CD4-positive, alpha-beta T cell (primary cell): ENCODE measurements at regions of chr17 and their contacts with region 1.

Region 1: DNA sequence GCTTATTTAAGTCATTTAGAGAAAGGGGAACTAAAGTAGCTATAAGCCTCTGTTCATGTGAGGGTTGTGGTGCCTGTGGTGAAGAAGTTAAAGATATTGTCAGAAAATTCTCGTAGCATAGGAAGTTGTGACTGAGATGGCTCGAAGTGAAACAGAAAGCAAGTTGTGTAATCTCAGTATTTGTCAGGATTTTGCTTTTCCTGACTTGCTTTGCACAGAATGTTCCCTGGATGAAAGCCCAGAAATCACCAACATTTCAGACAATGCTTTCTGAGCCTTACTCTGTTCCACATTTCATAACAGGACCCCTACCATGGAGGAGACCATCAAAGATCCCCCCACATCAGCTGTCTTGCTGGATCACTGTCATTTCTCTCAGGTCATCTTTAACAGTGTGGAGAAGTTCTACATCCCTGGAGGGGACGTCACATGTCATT is 10.6 kb downstream of the CALCOCO2 start:
- DNase-seq: peak in 4 of 14 experiments; percentile 20 to 86 (median 72)
- ATAC-seq: peak; percentile 84
- H3K4me3 ChIP-seq: peak overlapping the region; percentile 46
- H3K4me3 Mint-ChIP-seq: peak overlapping the region; percentile 79
- H3K27ac ChIP-seq: peak overlapping the region; percentile 44 to 80
- H3K27ac Mint-ChIP-seq: peak overlapping the region; percentile 91
- H3K4me1 ChIP-seq: peaks cover 50% of the 10 kb centered on the region
- H3K4me1 Mint-ChIP-seq: peaks cover 51% of the 10 kb centered on the region
- H3K27me3 ChIP-seq: no peaks in the 10 kb centered on the region
- H3K27me3 Mint-ChIP-seq: no peaks in the 10 kb centered on the region
- CTCF ChIP-seq: no peak

Region 2: GRCh38 chr17:48618256-48618897 is 223.0 kb before region 1 on chr17:
- CTCF ChIA-PET with region 1: no interaction called
- POLR2A ChIA-PET with region 1: no interaction called
- intact Hi-C with region 1: no loop called
- DNase-seq: peak; percentile 68 to 91 (median 80)
- ATAC-seq: peak; percentile 75
- H3K4me3 ChIP-seq: no peak overlapping the region
- H3K4me3 Mint-ChIP-seq: peak overlapping the region; percentile 34
- H3K27ac ChIP-seq: no peak overlapping the region
- H3K27ac Mint-ChIP-seq: no peak overlapping the region
- H3K4me1 ChIP-seq: peaks cover 40% of the 10 kb centered on the region
- H3K4me1 Mint-ChIP-seq: peaks cover 44% of the 10 kb centered on the region
- H3K27me3 ChIP-seq: peaks cover 94 to 99% of the 10 kb centered on the region in 2 experiments
- H3K27me3 Mint-ChIP-seq: peaks cover 100% of the 10 kb centered on the region
- CTCF ChIP-seq: peak; percentile 99

Region 3: GRCh38 chr17:48816774-48817590 is 24.4 kb before region 1 on chr17 and contains the start of gene TTLL6:
- CTCF ChIA-PET with region 1: interaction called, 5 read pairs
- POLR2A ChIA-PET with region 1: interaction called, 3 read pairs
- intact Hi-C with region 1: loop called in 1 of 2 experiments (anchors 2 kb)
- DNase-seq: peak; percentile 56 to 91 (median 78)
- ATAC-seq: peak; percentile 98
- H3K4me3 ChIP-seq: peak within 1 kb of the TSS; percentile 50
- H3K4me3 Mint-ChIP-seq: peak within 1 kb of the TSS; percentile 87
- H3K27ac ChIP-seq: no peak within 1 kb of the TSS
- H3K27ac Mint-ChIP-seq: no peak within 1 kb of the TSS
- H3K4me1 ChIP-seq: peaks cover 22% of the 10 kb centered on the region
- H3K4me1 Mint-ChIP-seq: peaks cover 22% of the 10 kb centered on the region
- H3K27me3 ChIP-seq: peaks cover 16 to 32% of the 10 kb centered on the region in 2 experiments
- H3K27me3 Mint-ChIP-seq: peaks cover 71% of the 10 kb centered on the region
- CTCF ChIP-seq: no peak
- total RNA-seq, gene TTLL6: not detected